Mammary epithelial cell (primary cell): ENCODE measurements at regions of chr6 and their contacts with region 1.

Region 1: GRCh38 chr6:24359640-24360454 is 2.0 kb upstream of the DCDC2 start:
- DNase-seq: peak; percentile 74
- H3K4me3 ChIP-seq: peak overlapping the region; percentile 30 to 52 (median 46)
- H3K27ac ChIP-seq: no peak overlapping the region
- H3K4me1 ChIP-seq: peaks cover 10% of the 10 kb centered on the region
- H3K27me3 ChIP-seq: peaks cover 6% of the 10 kb centered on the region
- CTCF ChIP-seq: peak; percentile 73 to 89

Region 2: DNA sequence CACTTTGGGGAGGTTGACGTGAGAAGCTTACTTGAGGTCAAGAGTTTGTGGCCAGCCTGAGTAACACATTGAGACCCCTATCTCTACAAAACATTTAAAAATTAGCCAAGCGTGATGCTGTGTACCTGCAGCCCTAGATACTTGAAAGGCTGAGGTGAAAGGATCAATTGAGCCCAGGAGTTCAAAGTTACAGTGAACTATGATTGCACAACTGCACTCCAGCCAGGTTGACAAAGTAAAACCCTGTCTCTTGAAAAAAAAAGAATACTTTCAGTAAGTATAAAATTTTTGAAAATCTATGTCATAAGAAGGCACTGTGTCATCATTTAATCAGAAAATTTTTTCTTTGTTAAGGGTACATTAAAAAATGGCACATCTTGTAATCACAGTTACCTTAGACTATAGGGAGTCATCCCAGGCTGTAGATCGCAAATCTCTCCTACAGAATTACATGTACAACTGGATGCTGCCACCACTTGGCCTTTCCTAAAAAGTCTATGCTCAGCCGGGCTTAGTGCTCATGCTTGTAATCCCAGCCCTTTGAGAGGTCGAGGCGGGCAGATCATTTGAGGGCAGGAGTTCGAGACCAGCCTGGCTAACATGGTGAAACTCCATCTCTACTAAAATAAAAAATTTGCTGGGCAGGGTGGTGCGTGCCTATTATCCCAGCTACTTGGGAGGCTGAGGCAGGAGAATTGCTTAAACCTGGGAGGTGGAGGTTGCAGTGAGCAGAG is 25.9 kb after region 1 on chr6:
- CTCF ChIA-PET with region 1: no interaction called
- dilution Hi-C with region 1: no loop called
- in situ Hi-C with region 1: no loop called
- intact Hi-C with region 1: loop called (anchors 2 kb)
- DNase-seq: no peak
- H3K4me3 ChIP-seq: no peak overlapping the region
- H3K27ac ChIP-seq: no peak overlapping the region
- H3K4me1 ChIP-seq: peaks cover 5% of the 10 kb centered on the region
- H3K27me3 ChIP-seq: no peaks in the 10 kb centered on the region
- CTCF ChIP-seq: no peak